Activated naive CD4-positive, alpha-beta T cell treated with anti-CD3 and anti-CD28 coated beads for 36 hours (primary cell): ENCODE measurements at regions of chr2 and their contacts with region 1.

Region 1: GRCh38 chr2:98771721-98772524 is 41.0 kb upstream of the MGAT4A start:
- DNase-seq: peak; percentile 80
- H3K4me3 Mint-ChIP-seq: peak overlapping the region; percentile 92
- H3K27ac Mint-ChIP-seq: peak overlapping the region; percentile 93
- H3K4me1 Mint-ChIP-seq: peaks cover 69% of the 10 kb centered on the region
- H3K27me3 Mint-ChIP-seq: no peaks in the 10 kb centered on the region

Region 2: DNA sequence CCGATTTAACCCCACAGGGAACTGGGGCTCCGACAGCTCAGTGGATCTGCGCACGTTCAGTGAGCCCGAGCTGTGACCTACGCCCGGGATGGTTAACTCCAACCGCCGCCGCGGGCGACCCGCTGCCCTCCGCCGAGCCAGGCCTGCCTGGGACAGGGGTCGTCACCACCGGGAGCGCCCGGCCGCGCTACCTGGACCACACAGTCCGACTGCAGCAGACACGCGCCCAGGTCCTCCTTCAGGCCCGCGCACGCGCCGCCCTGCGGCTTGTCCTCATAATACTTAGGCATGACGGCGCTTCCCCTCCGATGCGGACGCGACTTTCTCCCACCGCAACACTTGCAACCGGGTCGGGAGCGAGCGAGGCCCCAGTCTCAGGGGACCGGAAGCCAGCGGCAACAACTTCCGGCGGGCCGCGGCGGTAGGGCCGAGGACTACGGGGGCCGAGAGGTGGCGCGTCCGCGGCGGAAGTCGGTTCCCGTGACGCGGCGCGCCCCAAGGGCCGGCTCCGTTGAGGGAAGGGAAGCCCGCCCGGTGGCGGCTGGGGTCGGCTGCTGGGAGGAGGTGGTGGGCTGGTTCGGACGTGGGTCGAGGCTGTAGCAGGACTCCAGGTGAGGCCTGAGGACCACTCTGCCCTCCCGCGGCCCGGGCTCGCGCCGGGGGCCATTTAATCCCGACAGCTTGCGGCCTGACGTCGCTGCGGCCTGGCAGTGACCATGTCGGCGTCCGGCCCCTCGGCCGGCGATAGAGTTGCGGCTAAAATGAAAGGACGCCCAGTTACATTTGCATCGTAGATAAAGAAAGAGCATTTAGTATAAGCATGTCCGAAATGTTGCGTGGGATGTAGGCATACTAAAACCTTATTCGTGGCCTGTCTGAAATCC is 163.6 kb before region 1 on chr2 and contains the starts of genes COA5 and UNC50:
- CTCF ChIA-PET with region 1: no interaction called
- intact Hi-C with region 1: loop called (anchors 1 kb)
- DNase-seq: peak; percentile 90
- H3K4me3 Mint-ChIP-seq: peak within 1 kb of the TSS; percentile 89
- H3K27ac Mint-ChIP-seq: peak within 1 kb of the TSS; percentile 93
- H3K4me1 Mint-ChIP-seq: peaks cover 60% of the 10 kb centered on the region
- H3K27me3 Mint-ChIP-seq: no peaks in the 10 kb centered on the region
- total RNA-seq, gene COA5: 34.4 to 37.8 TPM
- total RNA-seq, gene UNC50: 23.0 to 24.1 TPM

Region 3: GRCh38 chr2:98654699-98655495 is 117.0 kb before region 1 on chr2:
- CTCF ChIA-PET with region 1: interaction called, 12 read pairs
- intact Hi-C with region 1: loop called (anchors 2 kb)
- DNase-seq: peak; percentile 53
- H3K4me3 Mint-ChIP-seq: peak overlapping the region; percentile 57
- H3K27ac Mint-ChIP-seq: peak overlapping the region; percentile 94
- H3K4me1 Mint-ChIP-seq: peaks cover 80% of the 10 kb centered on the region
- H3K27me3 Mint-ChIP-seq: no peaks in the 10 kb centered on the region

Region 4: DNA sequence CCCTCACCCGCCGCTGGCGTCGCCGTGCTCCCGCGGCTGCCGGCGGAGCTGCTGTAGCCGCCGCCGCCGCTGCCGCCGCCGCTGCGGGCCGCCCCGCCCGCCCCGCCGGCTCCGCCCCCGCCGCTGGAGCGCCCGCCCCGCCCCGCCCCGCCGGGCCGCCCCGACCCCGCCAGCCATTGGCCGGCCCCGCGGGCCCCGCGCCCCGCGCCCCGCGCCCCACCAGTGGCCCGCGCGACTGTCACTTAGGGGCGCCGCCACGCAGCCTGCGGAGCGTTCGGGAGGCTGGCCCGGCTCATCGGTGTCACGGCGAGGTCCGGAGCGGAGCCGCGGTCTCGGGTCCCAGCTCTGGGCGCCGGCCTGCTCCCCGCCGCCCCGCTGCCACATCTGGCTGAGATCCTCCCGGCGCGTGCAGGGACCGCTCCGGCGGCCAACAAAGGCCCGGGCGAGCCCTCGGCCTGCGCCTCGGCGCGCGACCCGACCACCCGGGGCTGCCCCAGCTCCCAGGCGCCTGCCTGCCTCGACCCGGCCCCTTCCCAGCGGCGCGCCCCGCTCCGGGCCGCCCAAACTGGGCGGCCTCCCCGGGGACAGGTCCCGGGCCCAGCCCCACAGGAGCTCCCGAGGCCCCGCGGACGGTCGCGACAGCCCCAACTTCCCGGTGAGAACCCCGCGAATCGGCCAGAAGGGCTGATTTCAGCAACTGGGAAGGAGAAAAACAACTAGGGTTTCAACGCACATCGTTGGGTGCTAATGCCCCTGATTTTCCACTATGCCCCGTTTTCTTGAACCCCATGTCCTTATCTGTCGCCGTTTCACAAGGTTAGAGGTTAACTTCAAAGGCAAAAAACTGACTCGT is 40.7 kb before region 1 on chr2 and contains the start of gene MGAT4A:
- CTCF ChIA-PET with region 1: interaction called, 5 read pairs
- intact Hi-C with region 1: loop called (anchors 1 kb)
- DNase-seq: peak; percentile 81
- H3K4me3 Mint-ChIP-seq: peak within 1 kb of the TSS; percentile 89
- H3K27ac Mint-ChIP-seq: peak within 1 kb of the TSS; percentile 95
- H3K4me1 Mint-ChIP-seq: peaks cover 60% of the 10 kb centered on the region
- H3K27me3 Mint-ChIP-seq: no peaks in the 10 kb centered on the region
- total RNA-seq, gene MGAT4A: 85.5 to 87.5 TPM

Region 5: GRCh38 chr2:98757904-98758421 is 14.0 kb before region 1 on chr2:
- CTCF ChIA-PET with region 1: interaction called, 5 read pairs
- intact Hi-C with region 1: loop called (anchors 1 kb)
- DNase-seq: peak; percentile 76
- H3K4me3 Mint-ChIP-seq: peak overlapping the region; percentile 59
- H3K27ac Mint-ChIP-seq: peak overlapping the region; percentile 86
- H3K4me1 Mint-ChIP-seq: peaks cover 52% of the 10 kb centered on the region
- H3K27me3 Mint-ChIP-seq: no peaks in the 10 kb centered on the region

Region 6: DNA sequence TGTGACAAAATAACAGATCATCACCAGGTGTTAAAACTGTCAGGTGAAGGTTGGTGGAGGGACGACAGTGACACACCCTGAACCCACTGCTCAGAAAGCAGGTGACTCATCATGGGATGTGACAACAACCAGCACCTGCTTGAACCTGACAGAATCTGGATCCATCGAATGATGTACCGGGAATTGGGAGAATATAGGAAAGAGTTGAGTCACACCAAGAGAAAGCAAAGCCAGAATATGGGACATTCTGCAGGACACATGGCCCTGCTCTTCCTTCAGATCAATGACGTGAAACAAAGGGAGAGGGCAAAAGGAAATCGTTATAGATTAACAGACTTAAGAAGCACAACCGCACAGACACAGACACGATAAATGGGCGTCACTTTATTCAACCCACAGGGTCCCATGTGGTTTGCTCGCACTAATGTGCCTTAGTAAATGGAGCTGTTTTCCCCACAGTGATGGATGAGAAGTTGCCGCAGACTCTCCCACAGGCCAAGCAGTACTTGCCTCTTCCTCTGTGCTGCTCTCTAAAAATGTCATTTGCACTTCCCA is 64.0 kb after region 1 on chr2:
- CTCF ChIA-PET with region 1: interaction called, 4 read pairs
- intact Hi-C with region 1: loop called (anchors 2 kb)
- DNase-seq: peak; percentile 69
- H3K4me3 Mint-ChIP-seq: peak overlapping the region; percentile 5
- H3K27ac Mint-ChIP-seq: peak overlapping the region; percentile 62
- H3K4me1 Mint-ChIP-seq: peaks cover 26% of the 10 kb centered on the region
- H3K27me3 Mint-ChIP-seq: no peaks in the 10 kb centered on the region